GM12878 (cell line): ENCODE measurements at regions of chr10 and their contacts with region 1.

Region 1: GRCh38 chr10:96690755-96691731 is 29.3 kb downstream of the PIK3AP1 start:
- DNase-seq: no peak
- ATAC-seq: peak; percentile 64
- H3K4me3 ChIP-seq: no peak overlapping the region
- H3K27ac ChIP-seq: no peak overlapping the region
- H3K4me1 ChIP-seq: peaks cover 31% of the 10 kb centered on the region
- H3K27me3 ChIP-seq: no peaks in the 10 kb centered on the region
- CTCF ChIP-seq: peak in 1 of 3 experiments; percentile 35; a peak in 2 of 6 replicates
- EP300 ChIP-seq: no peak
- POLR2A ChIP-seq: no peak
- RAD21 ChIP-seq: peak; percentile 71

Region 2: GRCh38 chr10:96642973-96643372 is 48.1 kb before region 1 on chr10:
- CTCF ChIA-PET with region 1: interaction called, 24 read pairs
- POLR2A ChIA-PET with region 1: interaction called, 4 read pairs
- RAD21 ChIA-PET with region 1: interaction called, 33 read pairs
- SMC1A ChIA-PET with region 1: interaction called, 95 read pairs
- in situ Hi-C with region 1: no loop called
- intact Hi-C with region 1: loop called (anchors 1 kb)
- DNase-seq: no peak
- ATAC-seq: peak; percentile 78
- H3K4me3 ChIP-seq: no peak overlapping the region
- H3K27ac ChIP-seq: no peak overlapping the region
- H3K4me1 ChIP-seq: peaks cover 34% of the 10 kb centered on the region
- H3K27me3 ChIP-seq: no peaks in the 10 kb centered on the region
- CTCF ChIP-seq: peak; percentile 74 to 94 (median 85)
- EP300 ChIP-seq: no peak
- POLR2A ChIP-seq: no peak
- RAD21 ChIP-seq: peak; percentile 92

Region 3: DNA sequence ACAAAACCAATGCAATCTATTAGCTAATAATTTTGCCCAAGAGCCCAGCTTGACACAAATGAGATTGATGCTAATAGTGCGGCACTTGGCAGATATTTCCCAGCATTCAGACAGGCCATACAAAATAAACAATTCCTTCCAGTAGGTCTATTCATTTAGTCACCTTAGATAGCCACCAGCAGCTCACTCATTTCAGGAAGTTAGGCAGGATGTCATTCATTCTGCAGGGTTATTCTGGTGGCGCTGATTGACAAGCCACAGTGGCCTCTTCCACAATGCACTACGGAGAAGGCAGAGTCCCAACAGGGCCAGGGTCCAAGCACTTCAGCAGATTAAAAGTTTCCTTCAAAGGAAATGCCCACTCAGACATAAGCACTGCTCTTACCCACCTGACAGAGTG is 26.5 kb before region 1 on chr10:
- CTCF ChIA-PET with region 1: interaction called, 7 read pairs
- POLR2A ChIA-PET with region 1: interaction called, 57 read pairs
- RAD21 ChIA-PET with region 1: interaction called, 6 read pairs
- SMC1A ChIA-PET with region 1: interaction called, 13 read pairs
- in situ Hi-C with region 1: no loop called
- intact Hi-C with region 1: no loop called
- DNase-seq: no peak
- ATAC-seq: peak; percentile 58
- H3K4me3 ChIP-seq: no peak overlapping the region; the same call in 1 of the 2 replicates
- H3K27ac ChIP-seq: no peak overlapping the region
- H3K4me1 ChIP-seq: peaks cover 34% of the 10 kb centered on the region
- H3K27me3 ChIP-seq: no peaks in the 10 kb centered on the region
- CTCF ChIP-seq: no peak
- EP300 ChIP-seq: no peak
- POLR2A ChIP-seq: no peak
- RAD21 ChIP-seq: no peak

Region 4: GRCh38 chr10:96708456-96708855 is 17.4 kb after region 1 on chr10:
- CTCF ChIA-PET with region 1: interaction called, 11 read pairs
- POLR2A ChIA-PET with region 1: interaction called, 33 read pairs
- RAD21 ChIA-PET with region 1: interaction called, 22 read pairs
- SMC1A ChIA-PET with region 1: interaction called, 31 read pairs
- in situ Hi-C with region 1: no loop called
- intact Hi-C with region 1: no loop called
- DNase-seq: no peak
- ATAC-seq: peak; percentile 43
- H3K4me3 ChIP-seq: peak overlapping the region; percentile 62; the same call in 1 of the 2 replicates
- H3K27ac ChIP-seq: peak overlapping the region; percentile 61
- H3K4me1 ChIP-seq: peaks cover 37% of the 10 kb centered on the region
- H3K27me3 ChIP-seq: no peaks in the 10 kb centered on the region
- CTCF ChIP-seq: no peak
- EP300 ChIP-seq: no peak
- POLR2A ChIP-seq: no peak
- RAD21 ChIP-seq: no peak

Region 5: GRCh38 chr10:96831867-96832720 is 141.1 kb after region 1 on chr10 and contains the start of gene LCOR:
- CTCF ChIA-PET with region 1: no interaction called
- POLR2A ChIA-PET with region 1: no interaction called
- RAD21 ChIA-PET with region 1: no interaction called
- SMC1A ChIA-PET with region 1: no interaction called
- in situ Hi-C with region 1: no loop called
- intact Hi-C with region 1: loop called (anchors 5 kb)
- DNase-seq: no peak
- ATAC-seq: peak; percentile 64
- H3K4me3 ChIP-seq: peak within 1 kb of the TSS; percentile 100
- H3K27ac ChIP-seq: peak within 1 kb of the TSS; percentile 80
- H3K4me1 ChIP-seq: peaks cover 12% of the 10 kb centered on the region
- H3K27me3 ChIP-seq: no peaks in the 10 kb centered on the region
- CTCF ChIP-seq: no peak
- EP300 ChIP-seq: no peak
- POLR2A ChIP-seq: peak; percentile 90
- RAD21 ChIP-seq: no peak
- polyA plus RNA-seq, gene LCOR: 1.6 to 6.1 TPM

Region 6: GRCh38 chr10:96949039-96949683 is 258.1 kb after region 1 on chr10:
- CTCF ChIA-PET with region 1: no interaction called
- POLR2A ChIA-PET with region 1: no interaction called
- RAD21 ChIA-PET with region 1: no interaction called
- SMC1A ChIA-PET with region 1: no interaction called
- in situ Hi-C with region 1: no loop called
- intact Hi-C with region 1: no loop called
- DNase-seq: no peak
- ATAC-seq: no peak
- H3K4me3 ChIP-seq: no peak overlapping the region
- H3K27ac ChIP-seq: no peak overlapping the region
- H3K4me1 ChIP-seq: no peaks in the 10 kb centered on the region
- H3K27me3 ChIP-seq: no peaks in the 10 kb centered on the region
- CTCF ChIP-seq: no peak
- EP300 ChIP-seq: no peak
- POLR2A ChIP-seq: no peak
- RAD21 ChIP-seq: no peak